Calu3 (cell line): ENCODE measurements at regions of chr10 and their contacts with region 1.

Region 1: GRCh38 chr10:71899665-71900412 is 48.8 kb upstream of the PSAP start:
- DNase-seq: no peak
- H3K4me3 Mint-ChIP-seq: no peak overlapping the region
- H3K27ac Mint-ChIP-seq: no peak overlapping the region
- H3K4me1 Mint-ChIP-seq: peaks cover 8% of the 10 kb centered on the region
- H3K27me3 Mint-ChIP-seq: no peaks in the 10 kb centered on the region
- CTCF ChIP-seq: no peak

Region 2: DNA sequence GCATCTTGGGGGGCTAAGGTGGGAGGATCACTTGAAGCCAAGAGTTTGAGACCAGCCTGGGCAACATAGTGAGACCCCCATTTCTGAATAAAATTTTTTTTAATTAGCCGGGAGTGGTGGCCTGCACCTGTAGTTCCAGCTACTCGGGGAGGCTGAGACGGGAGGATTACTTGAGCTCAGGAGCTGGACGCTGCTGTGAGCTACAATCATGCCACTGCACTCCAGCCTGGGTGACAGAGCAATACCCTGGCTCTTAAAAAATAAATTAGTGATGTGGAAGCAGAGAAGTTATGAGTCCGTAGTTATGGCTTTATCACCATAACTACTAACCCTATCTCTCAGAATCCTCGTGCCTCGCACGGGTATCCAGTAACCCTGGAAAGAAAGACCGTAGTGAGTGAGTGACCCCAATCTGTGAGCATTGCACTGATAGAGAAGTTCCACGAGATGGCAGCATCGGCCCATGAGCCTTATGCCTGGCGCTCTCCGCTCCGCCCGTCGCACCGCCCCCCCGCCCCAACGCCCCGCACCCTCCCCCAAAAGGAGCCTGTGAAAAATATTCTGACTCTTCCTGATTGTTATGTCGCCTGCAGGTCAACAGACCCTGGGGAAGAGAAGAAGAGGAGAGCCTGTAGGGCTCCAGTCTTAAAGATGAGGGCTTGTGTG is 585.7 kb before region 1 on chr10:
- CTCF ChIA-PET with region 1: interaction called, 3 read pairs
- intact Hi-C with region 1: loop called (anchors 5 kb)
- DNase-seq: peak; percentile 62
- H3K4me3 Mint-ChIP-seq: no peak overlapping the region
- H3K27ac Mint-ChIP-seq: no peak overlapping the region
- H3K4me1 Mint-ChIP-seq: peaks cover 10% of the 10 kb centered on the region
- H3K27me3 Mint-ChIP-seq: peaks cover 43% of the 10 kb centered on the region
- CTCF ChIP-seq: peak; percentile 93

Region 3: GRCh38 chr10:71945819-71946474 is 46.1 kb after region 1 on chr10:
- CTCF ChIA-PET with region 1: no interaction called
- intact Hi-C with region 1: no loop called
- DNase-seq: no peak
- H3K4me3 Mint-ChIP-seq: no peak overlapping the region
- H3K27ac Mint-ChIP-seq: no peak overlapping the region
- H3K4me1 Mint-ChIP-seq: no peaks in the 10 kb centered on the region
- H3K27me3 Mint-ChIP-seq: no peaks in the 10 kb centered on the region
- CTCF ChIP-seq: no peak

Region 4: DNA sequence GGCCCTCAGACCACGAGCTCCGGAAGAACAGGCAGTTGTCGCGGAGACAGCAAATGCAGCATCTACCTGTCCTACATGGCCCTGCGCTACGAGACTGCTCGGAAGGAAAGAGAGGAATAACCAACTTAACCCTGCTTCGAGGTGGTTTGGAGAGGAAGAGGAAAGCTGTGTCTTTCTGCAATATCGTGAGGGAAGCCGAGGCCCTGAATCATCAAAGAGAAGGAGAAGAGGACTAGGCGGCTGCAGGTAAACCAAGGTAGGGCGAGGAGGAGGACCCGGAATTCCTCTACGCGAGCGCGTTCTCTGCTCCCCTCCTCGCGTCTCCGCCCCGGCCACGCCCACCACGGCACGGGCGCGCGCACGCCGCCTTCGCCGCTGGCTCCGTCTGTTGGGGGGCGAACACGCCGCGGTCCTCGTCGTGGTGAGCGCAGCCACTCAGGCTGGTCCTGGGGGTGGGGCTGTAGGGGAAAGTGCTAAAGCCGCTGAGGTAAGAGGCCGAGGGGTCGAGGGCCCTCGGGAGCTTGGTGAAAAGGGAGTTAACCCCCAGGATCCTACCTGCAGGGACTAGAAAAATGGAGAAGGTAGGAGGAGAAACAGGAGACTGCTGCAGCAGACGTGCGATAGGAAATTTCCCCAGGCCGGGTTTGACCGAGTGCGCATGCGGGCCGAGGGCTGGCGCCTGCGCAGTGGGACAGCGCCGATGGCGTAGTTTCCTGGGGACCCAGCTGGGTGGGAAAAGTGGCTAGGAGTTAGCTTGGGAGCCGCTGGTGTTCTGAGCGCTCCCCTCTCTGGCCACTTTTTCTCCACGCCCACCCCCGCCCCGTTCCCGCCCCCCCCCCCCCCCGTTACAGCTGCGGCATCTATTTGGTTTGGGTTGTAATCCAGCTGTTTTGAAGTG is 316.1 kb after region 1 on chr10 and contains the starts of genes ANAPC16 and ASCC1:
- CTCF ChIA-PET with region 1: interaction called, 17 read pairs
- intact Hi-C with region 1: loop called (anchors 10 kb)
- DNase-seq: peak; percentile 98
- H3K4me3 Mint-ChIP-seq: peak within 1 kb of the TSS; percentile 97
- H3K27ac Mint-ChIP-seq: peak within 1 kb of the TSS; percentile 92
- H3K4me1 Mint-ChIP-seq: peaks cover 27% of the 10 kb centered on the region
- H3K27me3 Mint-ChIP-seq: no peaks in the 10 kb centered on the region
- CTCF ChIP-seq: no peak
- total RNA-seq, gene ANAPC16: 118 and 119 TPM in 2 replicates
- total RNA-seq, gene ASCC1: 51.3 and 59.3 TPM in 2 replicates